H1 (cell line): ENCODE measurements at regions of chr16 and their contacts with region 1.

Region 1: DNA sequence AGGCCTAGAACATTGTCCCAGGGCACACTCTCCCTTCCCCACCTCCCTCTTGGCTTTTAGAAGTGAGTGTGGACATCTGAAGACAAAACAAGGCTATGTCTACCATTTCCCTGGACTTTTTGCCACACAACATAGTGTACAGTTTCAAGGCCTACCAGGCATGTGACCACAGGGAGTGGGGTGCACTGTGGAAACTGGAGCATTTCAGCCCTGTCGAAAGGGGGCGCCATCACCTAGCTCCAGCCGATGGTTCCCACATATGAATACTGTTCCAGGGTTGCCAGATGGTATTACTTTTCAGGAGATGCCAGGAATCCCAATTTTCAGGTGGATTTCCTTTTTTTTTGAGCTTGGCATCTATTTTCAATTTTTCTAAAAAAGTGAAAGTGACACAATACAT is 140.7 kb downstream of the KATNIP start:
- DNase-seq: peak in 1 of 2 experiments; percentile 77
- H3K4me3 ChIP-seq: no peak overlapping the region
- H3K27ac ChIP-seq: no peak overlapping the region
- H3K4me1 ChIP-seq: no peaks in the 10 kb centered on the region
- H3K27me3 ChIP-seq: no peaks in the 10 kb centered on the region
- CTCF ChIP-seq: peak; percentile 69 to 94 (median 94)
- EP300 ChIP-seq: no peak
- POLR2A ChIP-seq: no peak
- RAD21 ChIP-seq: peak; percentile 83

Region 2: DNA sequence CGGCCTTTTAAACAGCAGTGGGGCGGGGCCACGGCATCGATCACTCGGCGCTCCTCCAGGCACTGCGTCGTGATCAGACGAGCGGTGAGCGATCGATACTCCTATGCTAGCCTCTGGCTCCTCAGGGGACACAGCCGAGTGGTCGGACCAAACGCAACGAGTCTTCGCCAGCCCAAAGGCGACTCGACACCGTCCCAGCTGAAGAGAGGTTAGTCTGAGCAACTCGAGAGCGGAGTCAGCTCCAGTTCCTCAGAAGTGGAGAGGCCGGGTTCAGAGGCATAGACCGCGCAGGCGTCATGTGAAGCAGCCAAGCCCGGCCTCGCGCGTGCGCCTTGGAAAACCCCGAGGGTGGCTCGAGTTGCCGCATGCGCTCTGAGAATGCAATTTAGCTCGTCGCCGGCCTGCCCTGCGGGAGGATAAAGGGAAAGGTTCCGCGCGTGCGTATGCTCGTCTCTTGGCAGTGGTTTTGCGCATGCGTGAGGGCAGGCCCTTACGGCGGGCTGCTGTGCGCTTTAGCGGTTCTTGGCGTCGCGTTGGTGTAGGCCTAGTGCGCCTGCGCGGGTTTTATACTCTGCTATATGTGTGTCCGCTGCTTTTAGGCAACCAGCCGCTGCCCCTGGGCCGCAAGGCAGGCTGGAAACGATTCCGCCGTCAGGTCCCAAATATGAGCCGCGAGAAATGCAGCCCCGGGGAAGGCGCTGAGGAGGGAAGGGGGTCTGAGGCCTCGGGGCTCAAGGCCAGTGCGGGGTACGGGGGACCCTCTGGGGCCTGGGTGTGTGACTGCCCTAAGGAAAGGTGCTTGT is 487.0 kb before region 1 on chr16 and contains the start of gene KDM8:
- CTCF ChIA-PET with region 1: no interaction called
- POLR2A ChIA-PET with region 1: no interaction called
- DNase-seq: peak; percentile 94 to 98
- H3K4me3 ChIP-seq: peak within 1 kb of the TSS; percentile 68 to 92 (median 82)
- H3K27ac ChIP-seq: peak within 1 kb of the TSS; percentile 96
- H3K4me1 ChIP-seq: peaks cover 0 to 4% (median 3%) of the 10 kb centered on the region in 4 experiments; a peak in 3 of 7 replicates
- H3K27me3 ChIP-seq: no peaks in the 10 kb centered on the region
- CTCF ChIP-seq: no peak
- EP300 ChIP-seq: no peak
- POLR2A ChIP-seq: peak; percentile 96 to 98
- RAD21 ChIP-seq: no peak
- total RNA-seq, gene KDM8: 10.3 and 14.6 TPM in 2 replicates

Region 3: GRCh38 chr16:27625050-27625697 is 65.4 kb before region 1 on chr16:
- CTCF ChIA-PET with region 1: no interaction called
- POLR2A ChIA-PET with region 1: no interaction called
- DNase-seq: no peak
- H3K4me3 ChIP-seq: no peak overlapping the region
- H3K27ac ChIP-seq: no peak overlapping the region
- H3K4me1 ChIP-seq: no peaks in the 10 kb centered on the region; a peak in 1 of 7 replicates
- H3K27me3 ChIP-seq: no peaks in the 10 kb centered on the region
- CTCF ChIP-seq: no peak
- EP300 ChIP-seq: no peak
- POLR2A ChIP-seq: no peak
- RAD21 ChIP-seq: no peak

Region 4: GRCh38 chr16:27676839-27677238 is 13.8 kb before region 1 on chr16:
- CTCF ChIA-PET with region 1: interaction called, 12 read pairs
- POLR2A ChIA-PET with region 1: no interaction called
- DNase-seq: no peak
- H3K4me3 ChIP-seq: no peak overlapping the region
- H3K27ac ChIP-seq: no peak overlapping the region
- H3K4me1 ChIP-seq: no peaks in the 10 kb centered on the region; a peak in 1 of 7 replicates
- H3K27me3 ChIP-seq: no peaks in the 10 kb centered on the region
- CTCF ChIP-seq: no peak
- EP300 ChIP-seq: no peak
- POLR2A ChIP-seq: no peak
- RAD21 ChIP-seq: no peak

Region 5: DNA sequence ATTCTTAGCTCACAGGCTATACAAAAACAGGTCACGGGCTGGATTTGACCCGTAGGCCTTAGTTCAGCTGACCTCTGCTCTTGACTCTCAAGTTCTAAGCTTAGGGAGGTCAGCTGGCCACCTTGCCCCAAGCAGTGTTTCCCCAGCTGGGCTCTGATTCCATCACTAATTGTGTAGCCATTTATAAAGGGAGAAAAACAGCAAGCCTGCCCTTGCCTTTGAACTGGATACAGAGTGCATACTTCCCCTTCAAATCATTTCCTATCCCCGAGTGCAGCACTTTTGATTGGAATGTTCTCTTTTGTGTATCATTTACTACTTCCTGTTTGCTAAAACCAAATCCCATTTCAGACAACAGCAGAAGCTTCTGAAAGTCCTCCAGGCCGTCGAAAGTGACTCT is 12.9 kb after region 1 on chr16:
- CTCF ChIA-PET with region 1: interaction called, 19 read pairs
- POLR2A ChIA-PET with region 1: interaction called, 3 read pairs
- DNase-seq: no peak
- H3K4me3 ChIP-seq: no peak overlapping the region
- H3K27ac ChIP-seq: no peak overlapping the region
- H3K4me1 ChIP-seq: peaks cover 0 to 9% (median 2%) of the 10 kb centered on the region in 4 experiments; a peak in 4 of 7 replicates
- H3K27me3 ChIP-seq: no peaks in the 10 kb centered on the region
- CTCF ChIP-seq: no peak
- EP300 ChIP-seq: no peak
- POLR2A ChIP-seq: no peak
- RAD21 ChIP-seq: no peak

Region 6: DNA sequence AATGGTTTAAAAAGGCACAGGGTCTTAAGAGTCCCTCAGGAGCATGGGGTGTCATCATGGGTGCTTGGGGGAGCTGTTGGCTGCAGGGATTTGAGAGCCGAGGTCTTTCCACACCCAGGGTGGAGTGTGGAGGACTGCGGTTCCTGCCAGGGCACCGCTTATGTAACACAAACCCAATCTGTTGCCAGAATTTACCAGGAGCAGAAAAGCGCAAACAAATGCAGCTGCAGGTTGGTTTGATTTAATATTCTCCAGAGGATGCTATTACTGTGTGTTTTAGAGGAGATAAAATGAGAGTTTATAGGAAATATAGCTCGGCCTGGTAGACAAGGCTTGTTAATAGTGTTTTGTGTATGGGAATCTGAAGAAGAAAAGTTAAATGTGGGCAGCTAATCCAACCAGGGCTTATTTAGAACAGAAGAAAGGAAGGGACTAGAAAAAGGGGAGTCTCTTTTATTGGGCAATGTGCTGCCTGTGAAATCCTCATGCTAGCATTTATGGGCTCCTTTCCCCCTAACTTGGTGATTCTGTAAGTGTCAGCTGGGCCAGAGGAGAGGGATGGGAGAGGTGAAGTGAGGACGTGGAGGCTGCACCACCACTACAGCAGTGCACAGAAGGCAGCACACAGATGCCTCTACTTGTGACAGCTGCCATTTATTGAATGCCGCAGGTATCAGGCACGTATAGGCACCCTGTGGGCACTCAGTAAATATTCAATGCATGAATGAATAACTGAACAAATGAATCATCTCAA is 34.1 kb after region 1 on chr16:
- CTCF ChIA-PET with region 1: no interaction called
- POLR2A ChIA-PET with region 1: no interaction called
- DNase-seq: no peak
- H3K4me3 ChIP-seq: no peak overlapping the region
- H3K27ac ChIP-seq: no peak overlapping the region
- H3K4me1 ChIP-seq: peaks cover 0 to 7% (median 3%) of the 10 kb centered on the region in 4 experiments; a peak in 5 of 7 replicates
- H3K27me3 ChIP-seq: no peaks in the 10 kb centered on the region
- CTCF ChIP-seq: no peak
- EP300 ChIP-seq: no peak
- POLR2A ChIP-seq: no peak
- RAD21 ChIP-seq: no peak

Region 7: GRCh38 chr16:27748868-27749546 is 58.4 kb after region 1 on chr16:
- CTCF ChIA-PET with region 1: interaction called, 11 read pairs
- POLR2A ChIA-PET with region 1: interaction called, 3 read pairs
- DNase-seq: peak in 1 of 2 experiments; percentile 31
- H3K4me3 ChIP-seq: no peak overlapping the region
- H3K27ac ChIP-seq: no peak overlapping the region
- H3K4me1 ChIP-seq: peaks cover 0 to 5% (median 2%) of the 10 kb centered on the region in 4 experiments; a peak in 2 of 7 replicates
- H3K27me3 ChIP-seq: no peaks in the 10 kb centered on the region
- CTCF ChIP-seq: peak; percentile 54 to 70 (median 62)
- EP300 ChIP-seq: no peak
- POLR2A ChIP-seq: no peak
- RAD21 ChIP-seq: peak; percentile 42 to 43; a peak in 3 of 4 replicates

Region 8: GRCh38 chr16:27892881-27893280 is 202.3 kb after region 1 on chr16:
- CTCF ChIA-PET with region 1: no interaction called
- POLR2A ChIA-PET with region 1: no interaction called
- DNase-seq: peak; percentile 27 to 52
- H3K4me3 ChIP-seq: no peak overlapping the region
- H3K27ac ChIP-seq: no peak overlapping the region
- H3K4me1 ChIP-seq: peaks cover 0 to 2% (median 0%) of the 10 kb centered on the region in 4 experiments; a peak in 2 of 7 replicates
- H3K27me3 ChIP-seq: no peaks in the 10 kb centered on the region; a peak in 1 of 7 replicates
- CTCF ChIP-seq: peak; percentile 39 to 65 (median 44)
- EP300 ChIP-seq: no peak
- POLR2A ChIP-seq: no peak
- RAD21 ChIP-seq: peak; percentile 32 to 48